Ascending aorta (tissue), 2 donors: ENCODE measurements at regions of chr12 and their contacts with region 1.

Region 1: DNA sequence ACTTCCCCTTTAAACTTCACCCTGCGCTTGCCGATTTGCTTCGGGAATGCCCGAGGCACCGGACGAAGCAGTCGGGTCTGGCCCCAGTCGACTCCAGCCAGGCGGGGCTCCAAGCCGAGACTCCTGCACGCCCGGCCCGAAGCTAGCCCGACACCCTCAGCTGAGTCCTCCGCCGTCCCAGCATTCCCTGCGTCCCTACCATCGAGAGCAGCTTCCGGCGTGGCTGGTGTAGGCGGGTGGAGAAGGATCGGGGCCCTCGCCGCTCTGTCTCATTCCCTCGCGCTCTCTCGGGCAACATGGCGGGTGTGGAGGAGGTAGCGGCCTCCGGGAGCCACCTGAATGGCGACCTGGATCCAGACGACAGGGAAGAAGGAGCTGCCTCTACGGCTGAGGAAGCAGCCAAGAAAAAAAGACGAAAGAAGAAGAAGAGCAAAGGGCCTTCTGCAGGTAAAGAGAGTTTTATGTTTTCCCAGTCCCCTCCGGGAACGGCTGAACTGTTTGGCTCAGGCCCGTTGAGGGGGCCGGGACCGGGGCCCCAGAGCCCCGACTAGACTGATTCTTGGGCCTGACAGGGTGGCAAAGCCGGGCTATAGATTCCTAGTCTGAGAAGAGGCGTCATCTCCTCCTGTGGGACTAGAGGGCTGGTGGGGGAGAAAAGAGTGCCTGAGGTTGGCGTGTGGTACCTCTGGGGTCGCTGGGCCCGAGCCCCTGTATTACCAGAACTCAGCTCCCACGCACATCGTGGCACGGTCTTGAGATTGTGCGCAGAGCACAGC is at the start of gene METAP2:
- DNase-seq: peak; percentile 83 to 98
- H3K4me3 ChIP-seq: peak within 1 kb of the TSS; percentile 72 to 97
- H3K27ac ChIP-seq: peak within 1 kb of the TSS; percentile 94 to 96
- H3K4me1 ChIP-seq: peaks cover 3 to 25% of the 10 kb centered on the region in 2 donors
- H3K27me3 ChIP-seq: no peaks in the 10 kb centered on the region
- CTCF ChIP-seq: no peak
- total RNA-seq, gene METAP2: 20.6 TPM

Region 2: DNA sequence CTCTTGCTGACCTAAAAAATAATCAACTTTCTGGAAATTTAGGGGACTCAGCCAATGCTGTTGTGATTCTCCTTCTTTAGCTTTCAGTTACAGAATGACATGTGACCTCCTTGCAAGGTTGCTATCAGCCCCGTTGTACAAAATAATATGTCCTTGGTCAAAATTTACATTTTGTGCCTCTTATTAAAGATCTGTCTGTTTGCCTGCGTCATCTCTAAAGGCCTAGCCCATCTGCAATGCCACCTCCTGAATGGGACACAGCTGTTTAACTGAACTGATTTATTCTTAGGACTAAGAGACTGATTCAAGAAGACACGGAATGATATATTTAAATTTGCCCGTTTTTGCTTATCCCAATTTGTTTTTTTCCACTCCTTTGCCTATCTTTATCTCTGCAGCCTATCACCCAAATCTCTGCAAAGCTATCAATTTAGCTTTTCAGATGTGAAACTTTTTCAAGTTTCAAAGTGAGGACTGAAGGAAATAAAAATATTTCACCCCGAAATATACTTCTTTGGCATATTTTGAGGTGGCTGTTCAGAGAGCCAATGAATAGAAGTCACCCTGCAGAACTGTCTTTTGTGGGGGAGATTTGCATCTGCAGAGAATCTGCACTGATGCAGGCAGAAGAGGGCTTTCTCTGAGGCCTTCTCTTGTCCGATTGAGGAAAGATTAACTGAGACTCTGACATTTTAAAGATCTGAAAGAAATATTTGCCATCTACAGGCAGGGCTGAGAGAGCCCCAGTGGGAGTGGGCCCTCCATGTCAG is 130.4 kb before region 1 on chr12:
- intact Hi-C with region 1: loop called (anchors 5 kb)
- DNase-seq: no peak
- H3K4me3 ChIP-seq: no peak overlapping the region
- H3K27ac ChIP-seq: no peak overlapping the region
- H3K4me1 ChIP-seq: no peaks in the 10 kb centered on the region
- H3K27me3 ChIP-seq: no peaks in the 10 kb centered on the region
- CTCF ChIP-seq: no peak

Region 3: GRCh38 chr12:95385246-95386035 is 88.6 kb before region 1 on chr12:
- intact Hi-C with region 1: loop called (anchors 2 kb)
- DNase-seq: peak in 1 of 2 donors; percentile 69
- H3K4me3 ChIP-seq: peak overlapping the region; percentile 55 to 58
- H3K27ac ChIP-seq: peak overlapping the region; percentile 82 to 90
- H3K4me1 ChIP-seq: peaks cover 5 to 25% of the 10 kb centered on the region in 2 donors
- H3K27me3 ChIP-seq: no peaks in the 10 kb centered on the region
- CTCF ChIP-seq: no peak

Region 4: GRCh38 chr12:95418142-95418541 is 55.9 kb before region 1 on chr12:
- intact Hi-C with region 1: loop called (anchors 1 kb)
- DNase-seq: peak in 1 of 2 donors; percentile 65
- H3K4me3 ChIP-seq: peak overlapping the region in 1 of 2 donors; percentile 38
- H3K27ac ChIP-seq: peak overlapping the region; percentile 76 to 89
- H3K4me1 ChIP-seq: peaks cover 5 to 17% of the 10 kb centered on the region in 2 donors
- H3K27me3 ChIP-seq: no peaks in the 10 kb centered on the region
- CTCF ChIP-seq: no peak